Activated CD8-positive, alpha-beta memory T cell treated with anti-CD3 and anti-CD28 coated beads, Interleukin-2, amount 10 ng/mL, durations not matched to agents 7 days and 5 days (primary cell): ENCODE measurements at regions of chr1 and their contacts with region 1.

Region 1: GRCh38 chr1:29202584-29203340 is 21.1 kb upstream of the SRSF4 start:
- DNase-seq: peak; percentile 93
- ATAC-seq: peak; percentile 96
- H3K4me3 Mint-ChIP-seq: no peak overlapping the region
- H3K27ac Mint-ChIP-seq: peak overlapping the region; percentile 71
- H3K4me1 Mint-ChIP-seq: peaks cover 20% of the 10 kb centered on the region
- H3K27me3 Mint-ChIP-seq: no peaks in the 10 kb centered on the region

Region 2: DNA sequence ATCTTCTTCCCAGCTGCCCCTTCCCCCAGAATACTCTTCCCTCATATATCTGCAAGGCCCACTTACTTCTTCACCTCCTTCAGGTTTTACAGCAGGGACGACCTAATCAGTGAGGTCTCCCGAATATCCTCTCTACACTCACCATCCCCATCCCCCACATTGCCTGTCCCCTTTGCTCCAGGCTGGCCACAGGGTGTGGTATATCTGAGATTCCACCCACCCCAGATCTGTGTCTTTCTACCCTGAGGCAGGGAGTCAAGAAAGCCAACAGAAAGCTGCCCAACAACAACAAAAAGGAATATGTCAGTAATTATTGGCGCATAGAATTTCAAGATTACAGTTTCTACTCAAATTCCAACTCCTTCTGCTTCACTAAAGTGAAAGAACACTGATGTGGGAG is 420.8 kb before region 1 on chr1:
- CTCF ChIA-PET with region 1: interaction called, 11 read pairs
- DNase-seq: no peak
- ATAC-seq: no peak
- H3K4me3 Mint-ChIP-seq: no peak overlapping the region
- H3K27ac Mint-ChIP-seq: no peak overlapping the region
- H3K4me1 Mint-ChIP-seq: peaks cover 8% of the 10 kb centered on the region
- H3K27me3 Mint-ChIP-seq: peaks cover 7% of the 10 kb centered on the region

Region 3: DNA sequence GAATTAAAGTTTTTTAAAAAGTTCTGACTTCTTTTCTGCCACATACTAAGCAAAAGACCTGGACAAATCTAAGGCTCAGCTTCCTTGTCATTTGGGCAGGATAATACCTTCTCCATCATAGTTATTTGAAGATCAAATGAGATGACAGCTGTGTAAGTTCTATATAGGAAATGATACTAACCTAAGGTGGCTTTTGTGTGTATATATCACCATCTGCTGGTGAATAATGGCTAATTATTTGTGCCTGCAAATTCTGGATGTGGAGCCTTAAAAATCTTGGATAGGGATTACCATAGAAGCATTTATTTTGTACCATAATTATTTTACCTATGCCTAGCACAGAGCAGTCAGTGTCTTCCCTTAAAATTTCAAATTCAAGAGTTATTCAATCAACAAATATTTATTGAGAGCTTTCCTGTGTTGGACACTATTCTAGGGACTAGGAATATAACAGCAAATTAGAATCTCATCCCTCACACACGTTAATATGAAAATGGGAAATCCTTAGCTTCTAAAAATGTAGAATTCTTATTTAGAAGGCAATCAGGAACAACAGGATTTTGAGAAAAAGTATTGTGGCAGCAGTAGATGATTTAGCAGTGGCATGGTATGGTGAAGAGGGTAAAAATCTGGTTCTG is 168.8 kb before region 1 on chr1:
- CTCF ChIA-PET with region 1: interaction called, 52 read pairs
- DNase-seq: no peak
- ATAC-seq: peak; percentile 63
- H3K4me3 Mint-ChIP-seq: no peak overlapping the region
- H3K27ac Mint-ChIP-seq: no peak overlapping the region
- H3K4me1 Mint-ChIP-seq: no peaks in the 10 kb centered on the region
- H3K27me3 Mint-ChIP-seq: no peaks in the 10 kb centered on the region

Region 4: DNA sequence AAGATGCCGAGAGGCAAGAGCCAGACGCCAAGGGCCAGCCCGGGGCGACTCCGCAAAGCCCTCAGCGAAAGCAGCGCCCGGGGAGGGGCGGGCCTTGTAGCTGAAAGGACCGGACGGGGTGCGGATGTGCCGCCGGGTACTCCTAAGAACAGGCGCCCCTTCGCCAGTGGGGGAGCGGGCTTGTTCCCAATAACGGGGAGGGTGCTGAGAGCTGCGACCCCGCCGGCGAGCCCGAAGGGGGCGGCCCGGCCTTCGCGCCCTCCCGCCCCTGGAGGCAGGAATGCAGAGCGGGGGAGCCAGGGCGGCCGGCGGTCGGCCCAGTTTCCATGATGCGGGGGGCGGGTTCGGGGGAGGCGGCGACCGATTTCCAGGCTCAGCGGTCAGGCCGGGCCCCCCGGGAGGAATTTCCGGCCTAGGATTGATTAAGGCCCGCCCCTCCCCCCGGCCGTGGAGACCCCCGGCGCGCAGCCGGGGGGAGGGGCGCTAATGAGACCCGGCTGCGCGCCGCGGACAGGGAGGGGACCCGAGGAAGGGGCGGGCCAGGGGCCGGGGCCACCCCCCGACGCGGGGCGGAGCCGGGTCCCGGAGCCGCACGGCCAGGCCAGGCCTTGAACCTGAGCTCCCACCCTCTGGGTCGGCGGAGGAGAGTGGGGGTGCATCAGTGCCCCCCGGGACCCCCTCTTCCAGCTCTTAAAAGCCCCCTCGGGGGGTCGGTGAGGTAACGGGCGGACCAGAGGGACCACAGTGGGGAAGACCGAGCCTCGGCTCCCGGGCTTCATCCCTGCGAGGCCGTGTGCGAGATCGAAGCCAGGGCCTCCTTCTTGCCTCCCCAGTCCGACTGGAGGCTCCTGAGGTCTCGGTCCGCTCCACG is 78.2 kb before region 1 on chr1:
- CTCF ChIA-PET with region 1: interaction called, 23 read pairs
- DNase-seq: peak; percentile 77
- ATAC-seq: peak; percentile 71
- H3K4me3 Mint-ChIP-seq: peak overlapping the region; percentile 63
- H3K27ac Mint-ChIP-seq: no peak overlapping the region
- H3K4me1 Mint-ChIP-seq: peaks cover 4% of the 10 kb centered on the region
- H3K27me3 Mint-ChIP-seq: peaks cover 36% of the 10 kb centered on the region

Region 5: DNA sequence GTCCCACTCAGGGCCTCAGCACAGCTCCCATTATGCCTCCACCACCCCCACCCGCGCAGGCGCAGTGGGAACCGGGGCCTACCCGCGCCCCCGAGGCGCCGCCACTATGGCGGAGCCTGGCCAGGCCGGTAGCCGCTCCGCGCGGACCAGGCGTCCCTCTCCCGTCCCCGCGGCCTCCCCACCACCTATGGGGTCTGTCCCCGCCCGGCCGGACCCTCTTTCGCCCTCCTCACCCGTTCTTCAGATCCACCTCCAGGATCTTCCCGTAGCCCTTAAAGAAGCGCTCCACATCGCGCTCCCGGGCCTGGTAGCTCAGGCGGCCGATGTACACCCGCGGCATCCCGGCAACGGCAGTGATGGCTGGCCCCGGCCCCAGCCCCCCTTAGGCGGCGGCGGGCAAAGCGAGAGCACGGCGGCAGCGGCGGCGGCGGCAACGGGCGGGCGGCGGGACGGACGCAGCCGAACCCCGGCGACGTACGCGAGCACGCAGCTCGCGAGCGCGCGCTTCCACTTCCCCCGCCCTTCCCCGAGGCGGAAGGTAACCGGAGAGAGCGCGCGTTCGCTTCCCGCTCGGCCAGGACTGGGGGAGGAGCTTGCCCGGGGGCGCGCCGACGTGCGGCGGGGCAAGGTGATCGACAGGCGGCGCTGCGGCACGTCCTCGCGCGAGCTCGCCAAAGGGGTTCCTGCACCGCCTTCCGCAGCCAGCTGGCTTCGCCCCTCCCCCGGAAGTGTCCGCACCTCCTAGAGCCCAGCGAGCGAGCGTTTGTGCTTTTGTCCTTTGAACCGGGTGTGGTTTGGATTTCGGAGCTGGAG is 21.1 kb before region 1 on chr1 and contains the start of gene SRSF4:
- CTCF ChIA-PET with region 1: interaction called, 60 read pairs
- DNase-seq: peak; percentile 99
- ATAC-seq: peak; percentile 90
- H3K4me3 Mint-ChIP-seq: peak within 1 kb of the TSS; percentile 95
- H3K27ac Mint-ChIP-seq: peak within 1 kb of the TSS; percentile 97
- H3K4me1 Mint-ChIP-seq: peaks cover 44% of the 10 kb centered on the region
- H3K27me3 Mint-ChIP-seq: no peaks in the 10 kb centered on the region
- total RNA-seq, gene SRSF4: 145 to 147 TPM

Region 6: GRCh38 chr1:29282924-29283811 is 80.4 kb after region 1 on chr1:
- CTCF ChIA-PET with region 1: no interaction called
- DNase-seq: peak; percentile 46
- ATAC-seq: peak; percentile 67
- H3K4me3 Mint-ChIP-seq: peak overlapping the region; percentile 27
- H3K27ac Mint-ChIP-seq: no peak overlapping the region
- H3K4me1 Mint-ChIP-seq: no peaks in the 10 kb centered on the region
- H3K27me3 Mint-ChIP-seq: peaks cover under 1% of the 10 kb centered on the region